Aorta (tissue), 5 donors: ENCODE measurements at regions of chr20 and their contacts with region 1.

Region 1: GRCh38 chr20:54029643-54030042 is 40.8 kb downstream of the BCAS1 start:
- DNase-seq: no peak
- ATAC-seq: no peak
- H3K4me3 ChIP-seq: no peak overlapping the region
- H3K27ac ChIP-seq: no peak overlapping the region
- H3K4me1 ChIP-seq: no peaks in the 10 kb centered on the region
- H3K27me3 ChIP-seq: no peaks in the 10 kb centered on the region

Region 2: DNA sequence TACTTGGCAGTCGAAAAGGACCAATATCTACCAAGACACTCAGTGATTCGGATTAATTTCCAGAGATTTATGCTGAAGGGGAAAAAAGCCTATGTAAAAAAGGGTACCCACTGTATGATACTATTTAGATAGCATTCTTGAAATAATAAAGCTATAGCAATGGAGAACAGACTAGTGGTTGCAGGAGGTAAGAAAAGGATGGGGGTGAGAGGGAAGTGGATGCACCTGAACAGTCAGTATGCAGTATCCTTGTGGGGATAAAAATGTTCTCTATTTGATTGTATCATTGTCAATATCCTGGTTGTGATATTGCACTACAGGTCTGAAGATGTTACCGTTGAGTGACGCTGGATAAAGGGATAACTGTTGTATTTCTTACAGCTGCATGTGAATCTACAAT is 17.6 kb before region 1 on chr20:
- intact Hi-C with region 1: loop called in 1 of 2 experiments (anchors 1 kb)
- DNase-seq: no peak
- ATAC-seq: no peak
- H3K4me3 ChIP-seq: no peak overlapping the region
- H3K27ac ChIP-seq: no peak overlapping the region
- H3K4me1 ChIP-seq: no peaks in the 10 kb centered on the region
- H3K27me3 ChIP-seq: no peaks in the 10 kb centered on the region